ENCODE measurements at regions of chr9 and their contacts with region 1.

Region 1: DNA sequence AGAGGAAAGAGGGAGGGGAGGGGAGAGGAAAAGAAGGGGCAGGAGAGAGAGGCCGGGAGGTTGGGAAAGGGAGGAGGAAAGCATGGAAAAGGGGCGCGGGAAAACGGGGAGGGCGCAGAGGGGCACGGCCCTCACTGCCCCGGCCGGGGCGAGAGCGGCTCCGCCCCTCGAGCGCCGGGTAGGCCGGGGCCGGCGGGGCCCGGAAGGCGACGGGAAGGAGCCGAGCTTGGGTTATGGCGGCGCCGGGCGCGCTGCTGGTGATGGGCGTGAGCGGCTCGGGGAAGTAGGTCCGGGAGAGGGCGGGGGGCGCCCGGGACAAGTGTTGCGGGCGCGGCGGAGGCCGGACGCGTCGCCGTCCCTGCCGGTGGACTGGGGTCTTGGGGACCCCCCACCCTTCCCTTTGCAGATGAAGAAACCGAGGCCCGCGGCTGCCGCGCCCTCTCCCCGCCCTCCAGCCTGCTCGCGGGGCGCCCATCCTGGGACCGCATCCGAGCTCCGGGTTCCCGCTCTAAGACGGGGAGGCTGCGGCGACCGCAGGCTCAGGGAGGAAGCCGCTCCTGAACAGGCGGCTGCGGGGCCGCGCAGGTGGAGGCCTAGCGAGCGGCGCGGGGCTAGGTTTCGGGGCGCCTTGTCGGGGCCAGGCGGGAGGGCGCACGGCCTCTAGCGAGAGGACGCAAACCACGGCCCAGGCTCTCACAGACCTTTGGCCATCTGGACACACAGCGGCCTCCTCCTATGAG is at the start of gene IDNK:
- DNase-seq: peak; percentile 76
- H3K4me3 Mint-ChIP-seq: peak within 1 kb of the TSS; percentile 77
- H3K27ac Mint-ChIP-seq: peak within 1 kb of the TSS; percentile 93
- H3K4me1 Mint-ChIP-seq: peaks cover 26% of the 10 kb centered on the region
- H3K27me3 Mint-ChIP-seq: no peaks in the 10 kb centered on the region
- total RNA-seq, gene IDNK: 4.4 to 5.0 TPM

Region 2: GRCh38 chr9:83583151-83584014 is 39.7 kb before region 1 on chr9:
- CTCF ChIA-PET with region 1: no interaction called
- POLR2A ChIA-PET with region 1: no interaction called
- intact Hi-C with region 1: no loop called
- DNase-seq: peak; percentile 37
- H3K4me3 Mint-ChIP-seq: no peak overlapping the region
- H3K27ac Mint-ChIP-seq: no peak overlapping the region
- H3K4me1 Mint-ChIP-seq: peaks cover 7% of the 10 kb centered on the region
- H3K27me3 Mint-ChIP-seq: no peaks in the 10 kb centered on the region

Region 3: DNA sequence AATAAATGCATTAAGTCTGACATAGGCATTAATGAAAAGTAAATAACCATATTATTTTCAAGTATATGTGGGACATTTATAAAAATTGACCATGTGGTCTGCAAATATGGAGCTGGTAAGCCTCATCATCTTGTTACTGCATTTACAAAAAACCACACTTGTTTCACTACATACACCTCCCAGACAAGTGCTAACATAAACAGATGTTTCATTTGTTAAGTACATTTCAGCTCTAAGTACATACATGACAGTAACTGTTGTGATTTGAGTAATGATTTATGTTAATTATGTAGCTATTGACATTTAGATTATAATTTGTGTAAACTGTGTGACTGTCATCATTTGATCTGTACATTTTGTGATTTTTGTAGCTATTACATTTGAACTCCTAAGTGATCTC is 13.7 kb after region 1 on chr9:
- CTCF ChIA-PET with region 1: interaction called, 18 read pairs
- POLR2A ChIA-PET with region 1: interaction called, 4 read pairs
- intact Hi-C with region 1: no loop called
- DNase-seq: no peak
- H3K4me3 Mint-ChIP-seq: no peak overlapping the region
- H3K27ac Mint-ChIP-seq: no peak overlapping the region
- H3K4me1 Mint-ChIP-seq: no peaks in the 10 kb centered on the region
- H3K27me3 Mint-ChIP-seq: no peaks in the 10 kb centered on the region

Region 4: DNA sequence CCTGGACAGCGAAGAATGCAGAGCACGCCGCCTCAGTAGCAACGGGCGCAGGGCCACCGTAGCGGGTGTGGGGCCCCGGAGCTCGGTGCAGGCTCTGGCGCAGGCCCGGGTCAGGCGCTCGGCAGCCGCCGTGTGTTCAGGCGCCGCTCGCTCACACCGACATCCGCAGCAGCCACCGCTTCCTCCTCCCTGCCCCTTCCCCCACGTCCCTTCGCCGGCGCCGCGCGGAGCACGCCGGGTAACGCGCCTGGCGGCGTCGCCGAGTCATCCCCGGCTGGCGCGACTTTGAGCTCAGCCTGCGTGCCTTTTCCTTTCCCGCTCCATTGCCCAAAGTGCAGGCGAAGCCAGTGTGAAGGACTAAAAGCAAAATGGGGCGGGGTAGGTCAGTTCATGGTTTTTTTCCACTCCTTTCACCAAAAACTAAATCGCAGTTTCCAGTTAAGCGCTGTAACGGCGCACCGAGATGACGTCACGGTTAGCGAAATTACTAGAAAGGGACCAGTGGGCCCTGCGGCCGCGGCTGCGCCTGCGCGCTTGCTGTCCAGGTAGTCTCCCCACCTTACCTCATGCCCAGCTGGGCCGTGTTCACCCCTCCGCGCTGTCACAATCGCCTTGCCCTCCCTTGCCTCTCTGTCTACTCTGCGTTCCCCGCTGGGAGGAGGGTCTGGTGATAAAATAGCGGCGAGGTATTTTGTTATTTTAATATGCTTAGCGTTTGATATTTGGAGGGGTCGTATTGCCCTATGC is 84.8 kb after region 1 on chr9 and contains the start of gene UBQLN1:
- CTCF ChIA-PET with region 1: interaction called, 11 read pairs
- POLR2A ChIA-PET with region 1: interaction called, 24 read pairs
- intact Hi-C with region 1: loop called (anchors 1 kb)
- DNase-seq: peak; percentile 94
- H3K4me3 Mint-ChIP-seq: peak within 1 kb of the TSS; percentile 87
- H3K27ac Mint-ChIP-seq: peak within 1 kb of the TSS; percentile 99
- H3K4me1 Mint-ChIP-seq: peaks cover 45% of the 10 kb centered on the region
- H3K27me3 Mint-ChIP-seq: no peaks in the 10 kb centered on the region
- total RNA-seq, gene UBQLN1: 88.8 to 101 TPM

Region 5: DNA sequence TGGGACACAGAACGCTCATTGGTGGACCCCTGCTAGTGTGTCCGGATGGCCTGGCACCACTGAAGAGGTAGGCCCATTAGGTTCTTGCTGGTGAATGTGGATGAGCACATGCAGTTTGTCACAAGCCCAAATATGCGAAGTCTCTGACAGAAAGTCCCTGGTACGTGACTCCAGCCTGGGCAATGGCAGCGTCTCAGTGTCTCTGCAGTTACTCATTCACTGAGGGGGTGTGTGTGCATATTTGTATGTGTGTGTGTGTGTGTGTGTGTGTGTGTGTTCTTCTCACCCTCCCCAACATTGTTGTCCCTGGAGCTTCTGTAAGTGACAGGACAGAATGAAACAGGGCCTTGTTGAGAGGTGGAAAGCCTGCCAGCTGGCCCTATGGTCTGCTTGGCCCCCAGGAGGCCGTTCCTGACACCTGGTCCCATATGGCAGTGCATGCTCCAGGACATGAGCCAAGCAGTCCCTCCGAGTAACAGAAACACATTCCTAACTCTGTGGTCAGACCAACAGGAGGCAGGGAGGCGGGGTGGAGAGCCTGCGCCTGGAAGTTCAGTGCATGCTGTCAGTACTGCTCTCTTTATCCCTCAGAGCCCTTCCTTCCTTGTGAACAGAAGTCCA is 547.5 kb after region 1 on chr9:
- CTCF ChIA-PET with region 1: no interaction called
- POLR2A ChIA-PET with region 1: no interaction called
- intact Hi-C with region 1: loop called (anchors 10 kb)
- DNase-seq: no peak
- H3K4me3 Mint-ChIP-seq: no peak overlapping the region
- H3K27ac Mint-ChIP-seq: no peak overlapping the region
- H3K4me1 Mint-ChIP-seq: no peaks in the 10 kb centered on the region
- H3K27me3 Mint-ChIP-seq: no peaks in the 10 kb centered on the region

Measured in activated CD4-positive, alpha-beta memory T cell treated with anti-CD3 and anti-CD28 coated beads for 36 hours (primary cell).